ENCODE measurements at regions of chr10 and their contacts with region 1.

Region 1: DNA sequence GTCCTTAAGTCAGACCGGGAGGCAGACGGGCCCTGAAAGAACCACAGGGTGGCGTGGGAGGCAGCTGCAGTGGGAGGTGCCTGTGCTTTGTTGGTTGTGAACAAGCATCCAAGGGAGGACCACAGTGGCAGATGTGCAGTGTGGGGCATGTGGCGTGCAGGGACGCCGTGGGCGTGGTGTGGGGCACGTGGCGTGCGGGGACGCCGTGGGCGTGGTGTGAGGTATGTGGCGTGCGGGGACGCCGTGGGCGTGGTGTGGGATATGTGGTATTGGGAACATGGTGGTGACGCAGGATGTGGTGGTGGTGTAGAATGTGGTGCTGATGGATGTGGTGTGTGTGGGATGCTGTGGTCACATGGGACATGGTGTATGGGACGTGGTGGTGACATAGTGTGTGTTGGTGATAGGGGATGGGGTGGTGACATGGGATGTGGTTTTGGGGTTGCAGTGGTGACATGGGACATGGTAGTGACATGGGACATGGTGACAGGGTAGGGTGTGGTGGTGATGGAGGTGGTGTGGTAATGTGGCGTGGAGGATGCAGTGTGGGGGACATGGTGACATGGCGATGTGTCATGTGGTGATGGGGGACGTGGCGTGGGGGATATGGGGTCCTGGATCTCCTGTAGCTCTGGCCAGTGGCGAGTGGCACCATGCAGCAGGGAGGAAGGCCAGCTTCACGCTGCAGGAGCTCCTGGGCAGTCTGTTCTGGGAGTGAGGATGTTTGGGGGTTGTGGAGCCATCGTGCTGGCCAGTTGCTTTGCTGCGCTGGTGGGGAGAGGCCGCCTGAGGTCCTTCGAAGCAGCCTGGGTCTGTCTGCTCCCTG is 78.8 kb downstream of the INPP5A start:
- DNase-seq: peak; percentile 84
- H3K4me3 Mint-ChIP-seq: peak overlapping the region; percentile 25
- H3K27ac Mint-ChIP-seq: peak overlapping the region; percentile 81
- H3K4me1 Mint-ChIP-seq: peaks cover 25% of the 10 kb centered on the region
- H3K27me3 Mint-ChIP-seq: peaks cover 2% of the 10 kb centered on the region

Region 2: DNA sequence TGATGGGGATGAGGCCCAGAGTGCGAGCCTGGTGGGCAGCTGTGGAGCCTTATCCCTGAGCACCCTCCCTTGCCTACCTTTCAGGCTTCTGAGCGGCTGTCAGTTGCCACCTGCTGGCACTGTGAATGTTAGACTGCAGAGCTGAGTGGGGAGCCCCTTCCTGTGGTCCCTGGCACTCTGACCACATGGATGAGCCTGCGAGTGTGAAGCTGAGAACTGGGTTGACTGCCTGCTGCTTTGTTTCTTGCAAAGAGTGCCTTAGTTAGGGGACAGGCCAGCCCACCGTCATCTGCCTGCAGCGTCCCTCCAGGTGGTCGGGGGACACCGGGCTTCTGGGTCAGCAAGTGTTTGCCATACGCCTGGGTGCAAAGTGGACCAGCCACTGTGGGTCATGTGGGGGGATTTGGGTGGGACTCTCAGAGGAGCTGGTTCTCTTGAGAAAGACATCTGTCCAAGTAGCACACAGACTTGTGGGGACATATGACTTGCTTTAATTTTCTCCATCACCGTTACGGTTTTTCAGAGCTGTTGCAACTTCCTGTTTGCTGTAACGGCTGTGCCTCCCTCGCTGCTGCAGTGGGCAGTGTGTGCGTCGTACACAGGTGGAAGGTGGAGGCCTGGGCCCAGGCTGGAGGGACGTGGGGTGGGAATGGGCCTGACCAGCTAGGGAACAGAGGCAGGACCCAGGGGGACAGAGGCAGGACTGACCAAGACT is 65.1 kb before region 1 on chr10:
- CTCF ChIA-PET with region 1: no interaction called
- POLR2A ChIA-PET with region 1: no interaction called
- intact Hi-C with region 1: no loop called
- DNase-seq: peak; percentile 58
- H3K4me3 Mint-ChIP-seq: peak overlapping the region; percentile 38
- H3K27ac Mint-ChIP-seq: peak overlapping the region; percentile 52
- H3K4me1 Mint-ChIP-seq: peaks cover 29% of the 10 kb centered on the region
- H3K27me3 Mint-ChIP-seq: no peaks in the 10 kb centered on the region

Region 3: GRCh38 chr10:132571650-132572535 is 44.5 kb before region 1 on chr10:
- CTCF ChIA-PET with region 1: no interaction called
- POLR2A ChIA-PET with region 1: no interaction called
- intact Hi-C with region 1: loop called (anchors 1 kb)
- DNase-seq: peak; percentile 91
- H3K4me3 Mint-ChIP-seq: no peak overlapping the region
- H3K27ac Mint-ChIP-seq: peak overlapping the region; percentile 28
- H3K4me1 Mint-ChIP-seq: peaks cover 23% of the 10 kb centered on the region
- H3K27me3 Mint-ChIP-seq: no peaks in the 10 kb centered on the region

Region 4: GRCh38 chr10:132602614-132603013 is 13.8 kb before region 1 on chr10:
- CTCF ChIA-PET with region 1: no interaction called
- POLR2A ChIA-PET with region 1: no interaction called
- intact Hi-C with region 1: loop called (anchors 1 kb)
- DNase-seq: no peak
- H3K4me3 Mint-ChIP-seq: no peak overlapping the region
- H3K27ac Mint-ChIP-seq: no peak overlapping the region
- H3K4me1 Mint-ChIP-seq: no peaks in the 10 kb centered on the region
- H3K27me3 Mint-ChIP-seq: no peaks in the 10 kb centered on the region

Region 5: GRCh38 chr10:133458710-133459453 is 842.5 kb after region 1 on chr10:
- CTCF ChIA-PET with region 1: no interaction called
- POLR2A ChIA-PET with region 1: no interaction called
- intact Hi-C with region 1: no loop called
- DNase-seq: no peak
- H3K4me3 Mint-ChIP-seq: no peak overlapping the region
- H3K27ac Mint-ChIP-seq: no peak overlapping the region
- H3K4me1 Mint-ChIP-seq: no peaks in the 10 kb centered on the region
- H3K27me3 Mint-ChIP-seq: no peaks in the 10 kb centered on the region

Measured in activated CD4-positive, alpha-beta memory T cell treated with anti-CD3 and anti-CD28 coated beads for 36 hours (primary cell).